ENCODE measurements at regions of chr10 and their contacts with region 1.

Region 1: DNA sequence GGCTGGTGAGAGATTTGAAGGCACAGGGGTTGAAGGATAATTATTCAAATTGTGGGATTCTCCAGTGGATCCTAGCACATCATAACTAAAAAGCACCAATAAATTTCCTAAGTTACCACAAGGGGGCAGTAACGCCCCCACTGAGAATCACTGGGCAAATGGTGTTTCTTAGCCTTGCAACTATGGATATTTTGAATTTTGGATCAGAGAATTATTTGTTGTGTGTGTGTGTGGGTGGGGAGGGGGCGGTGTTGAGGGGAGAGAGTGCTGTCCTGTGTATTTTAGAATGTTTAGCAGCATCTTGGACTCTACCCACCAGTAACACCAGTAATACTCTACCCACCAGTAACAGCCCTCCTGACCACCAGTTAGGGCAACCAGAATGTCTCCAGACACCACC is 63.3 kb upstream of the PRKG1 start:
- DNase-seq: peak in 1 of 2 experiments; percentile 63
- H3K4me3 ChIP-seq: no peak overlapping the region
- H3K4me3 Mint-ChIP-seq: no peak overlapping the region
- H3K27ac Mint-ChIP-seq: no peak overlapping the region
- H3K4me1 ChIP-seq: no peaks in the 10 kb centered on the region
- H3K4me1 Mint-ChIP-seq: no peaks in the 10 kb centered on the region
- H3K27me3 ChIP-seq: no peaks in the 10 kb centered on the region
- H3K27me3 Mint-ChIP-seq: peaks cover 11% of the 10 kb centered on the region
- CTCF ChIP-seq: peak; percentile 82 to 96

Region 2: DNA sequence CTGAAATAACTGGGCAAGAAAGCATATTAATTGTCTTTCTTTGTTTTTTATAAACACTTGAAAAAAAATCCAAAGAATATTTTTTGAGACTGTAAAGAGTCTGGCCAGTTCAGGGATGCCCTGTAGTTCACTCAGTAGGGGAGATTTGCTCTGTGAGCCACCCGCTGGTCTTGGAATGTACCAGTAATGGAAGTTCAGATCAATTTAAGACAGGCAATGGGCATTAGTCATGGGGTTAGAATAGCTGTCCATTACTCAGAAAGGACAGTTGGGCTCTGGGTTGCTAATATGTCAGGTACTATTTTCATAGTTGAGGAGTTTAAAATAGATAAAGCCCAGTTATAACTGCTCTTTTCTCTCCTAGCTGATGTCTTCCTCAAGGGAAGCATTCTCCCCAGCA is 164.2 kb before region 1 on chr10:
- CTCF ChIA-PET with region 1: no interaction called
- POLR2A ChIA-PET with region 1: no interaction called
- intact Hi-C with region 1: no loop called
- DNase-seq: no peak
- H3K4me3 ChIP-seq: no peak overlapping the region
- H3K4me3 Mint-ChIP-seq: no peak overlapping the region
- H3K27ac Mint-ChIP-seq: no peak overlapping the region
- H3K4me1 ChIP-seq: peaks cover 20% of the 10 kb centered on the region
- H3K4me1 Mint-ChIP-seq: peaks cover 12% of the 10 kb centered on the region
- H3K27me3 ChIP-seq: no peaks in the 10 kb centered on the region
- H3K27me3 Mint-ChIP-seq: no peaks in the 10 kb centered on the region
- CTCF ChIP-seq: no peak

Region 3: GRCh38 chr10:51031950-51032349 is 21.0 kb after region 1 on chr10:
- CTCF ChIA-PET with region 1: no interaction called
- POLR2A ChIA-PET with region 1: no interaction called
- intact Hi-C with region 1: loop called (anchors 1 kb)
- DNase-seq: peak in 1 of 2 experiments; percentile 14
- H3K4me3 ChIP-seq: no peak overlapping the region
- H3K4me3 Mint-ChIP-seq: no peak overlapping the region
- H3K27ac Mint-ChIP-seq: no peak overlapping the region
- H3K4me1 ChIP-seq: no peaks in the 10 kb centered on the region
- H3K4me1 Mint-ChIP-seq: no peaks in the 10 kb centered on the region
- H3K27me3 ChIP-seq: no peaks in the 10 kb centered on the region
- H3K27me3 Mint-ChIP-seq: peaks cover 2% of the 10 kb centered on the region
- CTCF ChIP-seq: peak in 1 of 2 experiments; percentile 21

Region 4: DNA sequence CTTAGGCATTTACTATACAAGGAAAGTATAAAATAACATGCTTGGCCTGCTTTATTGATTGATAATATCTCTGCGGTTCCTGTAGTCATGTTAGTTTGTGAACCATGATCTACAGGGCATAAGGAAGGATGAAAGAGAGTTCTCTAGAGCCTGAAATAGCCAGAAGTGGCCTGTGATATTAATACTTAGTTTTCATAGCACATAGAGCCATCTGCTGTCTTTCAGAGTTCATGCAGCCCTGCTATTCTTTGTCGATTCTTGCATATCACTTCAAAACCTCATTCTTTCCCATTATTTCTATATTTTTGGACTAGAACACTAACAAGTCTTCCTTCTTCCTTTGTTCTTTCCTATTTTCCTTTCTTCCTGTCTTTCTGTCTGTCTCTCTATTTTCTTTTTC is 36.9 kb after region 1 on chr10:
- CTCF ChIA-PET with region 1: no interaction called
- POLR2A ChIA-PET with region 1: no interaction called
- intact Hi-C with region 1: loop called (anchors 2 kb)
- DNase-seq: no peak
- H3K4me3 ChIP-seq: no peak overlapping the region
- H3K4me3 Mint-ChIP-seq: no peak overlapping the region
- H3K27ac Mint-ChIP-seq: no peak overlapping the region
- H3K4me1 ChIP-seq: no peaks in the 10 kb centered on the region
- H3K4me1 Mint-ChIP-seq: no peaks in the 10 kb centered on the region
- H3K27me3 ChIP-seq: no peaks in the 10 kb centered on the region
- H3K27me3 Mint-ChIP-seq: peaks cover 9% of the 10 kb centered on the region
- CTCF ChIP-seq: peak in 1 of 2 experiments; percentile 22